PC-9 (cell line): ENCODE measurements at regions of chr7 and their contacts with region 1.

Region 1: DNA sequence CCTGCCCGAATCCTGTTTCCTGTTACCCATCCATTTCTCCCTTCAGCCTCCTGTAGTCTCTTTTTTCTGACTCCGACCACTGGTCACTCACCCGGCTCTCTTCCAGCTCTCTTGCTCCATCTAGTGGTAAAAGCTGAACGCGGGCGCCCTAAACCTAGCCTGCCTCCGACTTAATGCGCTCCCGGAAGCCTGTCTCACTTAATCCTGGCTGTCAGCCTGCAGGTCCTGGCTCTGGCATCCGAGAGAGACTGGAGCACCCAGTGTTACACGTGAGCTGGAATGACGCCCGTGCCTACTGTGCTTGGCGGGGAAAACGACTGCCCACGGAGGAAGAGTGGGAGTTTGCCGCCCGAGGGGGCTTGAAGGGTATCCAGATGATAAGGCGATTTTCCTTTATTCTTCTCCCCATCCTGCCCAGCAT is 10.3 kb downstream of the SUMF2 start:
- DNase-seq: peak; percentile 86 to 95
- H3K4me3 ChIP-seq: no peak overlapping the region
- H3K27ac ChIP-seq: no peak overlapping the region
- H3K4me1 ChIP-seq: peaks cover 29% of the 10 kb centered on the region
- H3K27me3 ChIP-seq: no peaks in the 10 kb centered on the region
- CTCF ChIP-seq: peak; percentile 100

Region 2: DNA sequence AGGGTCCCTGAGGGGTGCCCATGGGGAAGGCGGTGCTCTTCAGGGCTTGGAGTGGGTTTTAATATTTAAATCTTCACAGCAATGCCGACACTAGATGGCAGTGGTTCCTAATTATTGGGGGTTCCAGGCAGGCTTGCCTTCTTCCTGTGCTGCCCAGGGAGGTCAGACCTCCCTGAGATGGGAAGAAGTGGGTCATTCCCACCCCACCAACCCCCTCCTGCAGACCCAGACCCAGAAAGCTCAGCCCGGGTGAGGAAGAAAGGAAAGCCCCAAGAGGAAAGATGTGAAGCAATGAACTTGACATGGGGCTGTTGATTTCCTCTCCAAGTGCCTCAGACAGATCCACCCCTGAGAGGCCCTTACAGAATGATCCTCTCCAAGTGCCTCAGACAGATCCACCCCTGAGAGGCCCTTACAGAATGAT is 794.3 kb before region 1 on chr7:
- CTCF ChIA-PET with region 1: no interaction called
- POLR2A ChIA-PET with region 1: no interaction called
- intact Hi-C with region 1: loop called (anchors 1 kb)
- DNase-seq: peak; percentile 72 to 74
- H3K4me3 ChIP-seq: no peak overlapping the region
- H3K27ac ChIP-seq: no peak overlapping the region
- H3K4me1 ChIP-seq: no peaks in the 10 kb centered on the region
- H3K27me3 ChIP-seq: peaks cover 54% of the 10 kb centered on the region
- CTCF ChIP-seq: peak; percentile 99

Region 3: DNA sequence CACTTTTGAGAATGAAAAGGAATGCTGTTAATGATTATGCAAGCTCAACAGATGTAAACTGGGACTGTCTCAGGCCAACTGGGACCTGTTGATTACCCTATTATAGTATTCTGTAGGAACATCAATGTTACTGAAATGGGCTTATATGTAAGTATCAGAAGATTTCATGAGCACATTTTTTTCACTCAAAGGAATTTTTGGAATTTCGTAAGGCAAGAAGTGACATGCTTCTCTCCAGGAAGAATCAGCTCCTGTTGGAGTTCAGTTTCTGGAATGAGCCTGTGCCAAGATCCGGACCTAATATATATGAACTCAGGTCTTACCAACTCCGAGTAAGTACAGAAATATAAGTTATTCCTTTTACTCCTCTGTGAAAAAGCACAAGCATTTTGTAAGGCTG is 90.8 kb before region 1 on chr7:
- CTCF ChIA-PET with region 1: interaction called, 10 read pairs
- POLR2A ChIA-PET with region 1: interaction called, 3 read pairs
- intact Hi-C with region 1: no loop called
- DNase-seq: no peak
- H3K4me3 ChIP-seq: no peak overlapping the region
- H3K27ac ChIP-seq: no peak overlapping the region
- H3K4me1 ChIP-seq: no peaks in the 10 kb centered on the region
- H3K27me3 ChIP-seq: no peaks in the 10 kb centered on the region
- CTCF ChIP-seq: no peak

Region 4: DNA sequence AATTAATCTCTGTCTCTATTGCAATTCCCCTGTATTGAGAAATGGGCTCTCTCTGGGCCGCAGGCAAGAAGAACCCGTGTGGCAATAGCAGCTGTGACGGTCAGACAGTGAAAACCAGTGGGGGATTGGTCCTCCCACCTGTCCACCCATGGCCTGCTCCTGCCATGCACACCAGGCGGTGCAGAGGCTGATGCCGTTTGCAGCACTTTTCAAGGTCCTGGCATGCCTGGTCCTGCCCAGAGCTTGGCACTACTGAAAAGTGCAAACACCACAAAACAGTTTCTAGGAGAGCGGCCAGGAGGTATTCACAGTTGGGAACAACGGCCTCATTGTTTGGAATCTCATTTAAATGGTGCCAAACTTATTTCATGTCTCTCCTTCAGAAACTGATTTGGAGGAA is 64.7 kb before region 1 on chr7:
- CTCF ChIA-PET with region 1: interaction called, 8 read pairs
- POLR2A ChIA-PET with region 1: no interaction called
- intact Hi-C with region 1: loop called (anchors 1 kb)
- DNase-seq: no peak
- H3K4me3 ChIP-seq: no peak overlapping the region
- H3K27ac ChIP-seq: no peak overlapping the region
- H3K4me1 ChIP-seq: no peaks in the 10 kb centered on the region
- H3K27me3 ChIP-seq: no peaks in the 10 kb centered on the region
- CTCF ChIP-seq: no peak

Region 5: DNA sequence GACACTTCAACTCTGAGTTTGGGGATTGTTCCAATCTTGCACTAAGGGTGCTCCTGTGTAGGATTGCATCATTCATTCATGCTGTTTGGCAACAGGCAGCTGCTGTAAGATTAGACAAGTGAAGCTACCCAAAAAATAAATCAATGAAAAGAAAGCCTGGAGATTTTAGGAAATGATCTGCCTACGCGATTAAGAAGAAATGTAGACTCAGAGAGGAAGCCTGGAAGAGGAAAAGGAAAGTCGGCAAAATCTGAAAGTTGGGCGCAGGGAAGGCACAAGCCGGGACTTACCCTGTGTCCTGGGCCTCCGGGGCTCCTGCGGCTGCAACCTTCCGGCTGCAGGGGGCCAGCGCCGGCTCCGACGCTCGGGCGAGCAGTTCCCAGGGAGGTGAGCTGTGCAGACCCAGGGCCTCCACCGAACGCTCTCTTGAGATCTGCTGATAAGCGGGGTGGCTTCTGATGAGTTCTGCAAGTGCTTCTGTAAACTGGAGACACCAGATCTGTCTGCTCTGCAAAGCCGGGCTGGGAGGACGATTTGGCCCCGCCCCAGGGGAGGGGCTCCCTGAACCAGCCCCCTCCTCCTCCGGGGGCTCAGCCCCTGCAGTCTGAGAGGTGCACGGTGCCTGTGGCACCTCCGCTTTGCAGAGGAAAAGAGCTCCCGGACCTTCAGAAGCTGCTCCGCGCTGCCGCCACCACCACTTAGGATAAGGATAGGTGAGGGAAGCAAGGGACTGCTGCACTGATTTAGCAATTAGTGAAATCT is 40.5 kb before region 1 on chr7:
- CTCF ChIA-PET with region 1: interaction called, 14 read pairs
- POLR2A ChIA-PET with region 1: no interaction called
- intact Hi-C with region 1: no loop called
- DNase-seq: peak; percentile 73 to 79
- H3K4me3 ChIP-seq: peak overlapping the region; percentile 55
- H3K27ac ChIP-seq: peak overlapping the region; percentile 45
- H3K4me1 ChIP-seq: peaks cover 5% of the 10 kb centered on the region
- H3K27me3 ChIP-seq: no peaks in the 10 kb centered on the region
- CTCF ChIP-seq: peak; percentile 35; the same call in 1 of the 2 replicates

Region 6: DNA sequence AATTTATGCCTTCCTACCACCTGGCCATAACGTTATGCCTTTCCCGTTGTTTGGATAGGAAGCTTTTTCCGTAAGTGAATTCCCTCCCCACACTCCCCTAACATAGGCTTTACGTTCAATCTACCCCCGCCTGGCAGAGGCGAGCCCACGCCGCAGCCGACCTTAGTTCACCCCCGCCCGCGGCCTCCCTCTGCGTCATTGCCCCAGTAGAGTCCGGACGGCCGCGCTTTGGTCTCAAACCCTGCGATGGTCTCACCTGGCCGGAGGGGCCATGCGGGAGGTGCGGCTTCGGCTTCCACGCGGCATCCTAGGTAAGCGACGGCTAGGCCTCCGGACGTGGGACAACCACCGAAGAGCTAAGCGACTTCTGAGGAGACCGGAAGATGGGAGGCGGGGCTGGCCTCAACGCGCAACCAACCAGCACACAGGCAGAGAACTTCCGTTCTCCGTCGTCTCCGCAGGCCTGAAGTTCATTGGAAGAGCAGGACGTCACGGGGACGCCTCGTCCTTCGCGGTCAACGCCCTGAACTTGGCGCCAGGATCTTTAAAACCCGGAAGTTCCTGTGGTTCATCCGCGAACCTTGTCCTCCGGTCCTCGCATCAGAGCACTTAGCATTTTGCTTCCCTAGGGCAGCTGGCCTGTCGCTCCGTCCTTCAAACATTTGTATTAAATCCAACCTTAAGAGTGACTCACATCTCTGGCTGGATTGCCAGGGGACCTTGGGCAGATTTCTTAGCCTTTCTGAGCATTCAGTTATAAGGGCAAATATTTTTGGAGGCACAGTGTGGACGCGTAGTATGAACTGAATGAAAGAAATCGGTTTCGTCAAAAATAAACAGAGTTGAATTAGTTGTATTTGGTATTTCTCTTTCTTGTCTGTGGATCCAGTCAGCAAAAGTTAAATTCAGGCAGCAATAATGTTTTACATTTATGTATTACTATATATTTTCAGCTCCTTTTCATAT is 32.0 kb after region 1 on chr7 and contains the start of gene CHCHD2:
- CTCF ChIA-PET with region 1: no interaction called
- POLR2A ChIA-PET with region 1: interaction called, 4 read pairs
- intact Hi-C with region 1: loop called (anchors 1 kb)
- DNase-seq: peak; percentile 99 to 100
- H3K4me3 ChIP-seq: peak within 1 kb of the TSS; percentile 74
- H3K27ac ChIP-seq: peak within 1 kb of the TSS; percentile 73
- H3K4me1 ChIP-seq: peaks cover 25% of the 10 kb centered on the region
- H3K27me3 ChIP-seq: no peaks in the 10 kb centered on the region
- CTCF ChIP-seq: no peak
- total RNA-seq, gene CHCHD2: 978 and 1,041 TPM in 2 replicates